HepG2 (cell line): ENCODE measurements at regions of chr16 and their contacts with region 1.

Region 1: DNA sequence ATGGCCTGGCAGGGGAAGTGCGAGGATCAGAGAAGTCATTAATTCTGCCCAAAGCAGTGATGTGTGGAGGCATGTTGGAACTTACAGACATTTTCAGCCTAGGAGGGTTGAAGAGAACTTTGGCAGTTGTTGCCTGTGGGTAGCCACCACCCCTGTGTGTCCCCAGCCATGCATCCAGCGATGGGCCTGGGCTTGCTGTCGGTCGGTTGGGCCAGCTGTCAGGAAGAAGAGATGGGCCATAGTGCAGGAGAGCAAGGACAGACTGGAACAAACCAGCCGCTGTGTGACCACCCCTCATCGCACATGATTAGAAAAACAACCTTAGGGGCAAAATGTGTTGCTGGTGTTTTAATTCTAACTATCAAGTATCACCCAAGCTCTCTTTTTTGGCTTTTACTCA is 173.7 kb downstream of the CNTNAP4 start:
- DNase-seq: no peak
- ATAC-seq: no peak
- H3K4me3 ChIP-seq: no peak overlapping the region
- H3K27ac ChIP-seq: no peak overlapping the region
- H3K4me1 ChIP-seq: no peaks in the 10 kb centered on the region
- H3K27me3 ChIP-seq: no peaks in the 10 kb centered on the region
- CTCF ChIP-seq: no peak
- EP300 ChIP-seq: no peak
- POLR2A ChIP-seq: no peak
- RAD21 ChIP-seq: no peak

Region 2: DNA sequence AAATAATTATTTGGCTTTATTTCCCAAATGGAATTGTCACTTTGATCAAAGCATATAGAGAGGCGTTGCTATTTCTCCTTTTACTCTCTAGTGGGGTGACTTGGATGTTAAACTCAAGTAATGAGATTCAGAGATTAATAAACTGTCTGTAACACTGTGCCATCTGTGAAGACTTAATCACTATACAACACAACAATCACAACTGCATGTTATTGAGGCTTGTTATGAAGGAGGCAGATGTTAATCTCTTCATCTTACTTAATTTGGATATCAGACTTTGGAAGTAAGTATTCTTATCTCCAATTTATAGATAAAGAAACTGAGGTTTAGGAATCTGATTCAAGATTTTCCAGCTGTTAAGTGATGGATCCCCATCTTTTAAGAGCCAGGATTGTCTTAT is 41.2 kb before region 1 on chr16:
- CTCF ChIA-PET with region 1: no interaction called
- POLR2A ChIA-PET with region 1: no interaction called
- in situ Hi-C with region 1: no loop called
- intact Hi-C with region 1: loop called (anchors 1 kb)
- DNase-seq: no peak
- ATAC-seq: no peak
- H3K4me3 ChIP-seq: no peak overlapping the region
- H3K27ac ChIP-seq: no peak overlapping the region
- H3K4me1 ChIP-seq: no peaks in the 10 kb centered on the region
- H3K27me3 ChIP-seq: no peaks in the 10 kb centered on the region
- CTCF ChIP-seq: no peak
- EP300 ChIP-seq: no peak
- POLR2A ChIP-seq: no peak
- RAD21 ChIP-seq: no peak

Region 3: GRCh38 chr16:76421571-76421970 is 29.3 kb before region 1 on chr16:
- CTCF ChIA-PET with region 1: no interaction called
- POLR2A ChIA-PET with region 1: no interaction called
- in situ Hi-C with region 1: no loop called
- intact Hi-C with region 1: loop called (anchors 1 kb)
- DNase-seq: no peak
- ATAC-seq: no peak
- H3K4me3 ChIP-seq: no peak overlapping the region
- H3K27ac ChIP-seq: no peak overlapping the region
- H3K4me1 ChIP-seq: no peaks in the 10 kb centered on the region
- H3K27me3 ChIP-seq: no peaks in the 10 kb centered on the region; a peak in 1 of 5 replicates
- CTCF ChIP-seq: no peak
- EP300 ChIP-seq: no peak
- POLR2A ChIP-seq: no peak
- RAD21 ChIP-seq: no peak

Region 4: GRCh38 chr16:76729525-76729924 is 278.6 kb after region 1 on chr16:
- CTCF ChIA-PET with region 1: no interaction called
- POLR2A ChIA-PET with region 1: no interaction called
- in situ Hi-C with region 1: no loop called
- intact Hi-C with region 1: no loop called
- DNase-seq: no peak
- ATAC-seq: no peak
- H3K4me3 ChIP-seq: no peak overlapping the region
- H3K27ac ChIP-seq: no peak overlapping the region
- H3K4me1 ChIP-seq: no peaks in the 10 kb centered on the region
- H3K27me3 ChIP-seq: no peaks in the 10 kb centered on the region
- CTCF ChIP-seq: no peak
- EP300 ChIP-seq: no peak
- POLR2A ChIP-seq: no peak
- RAD21 ChIP-seq: no peak